ENCODE measurements at regions of chr15 and their contacts with region 1.

Region 1: GRCh38 chr15:41860049-41860828 is 21.6 kb downstream of the PLA2G4B start:
- DNase-seq: no peak
- H3K4me3 ChIP-seq: no peak overlapping the region
- H3K27ac ChIP-seq: no peak overlapping the region
- H3K4me1 ChIP-seq: peaks cover 0 to 13% (median 3%) of the 10 kb centered on the region in 4 experiments; a peak in 4 of 7 replicates
- H3K27me3 ChIP-seq: no peaks in the 10 kb centered on the region; a peak in 3 of 7 replicates
- CTCF ChIP-seq: peak in 1 of 3 experiments; percentile 42; a peak in 1 of 4 replicates
- EP300 ChIP-seq: no peak
- POLR2A ChIP-seq: no peak
- RAD21 ChIP-seq: peak in 1 of 2 experiments; percentile 32; a peak in 1 of 4 replicates

Region 2: DNA sequence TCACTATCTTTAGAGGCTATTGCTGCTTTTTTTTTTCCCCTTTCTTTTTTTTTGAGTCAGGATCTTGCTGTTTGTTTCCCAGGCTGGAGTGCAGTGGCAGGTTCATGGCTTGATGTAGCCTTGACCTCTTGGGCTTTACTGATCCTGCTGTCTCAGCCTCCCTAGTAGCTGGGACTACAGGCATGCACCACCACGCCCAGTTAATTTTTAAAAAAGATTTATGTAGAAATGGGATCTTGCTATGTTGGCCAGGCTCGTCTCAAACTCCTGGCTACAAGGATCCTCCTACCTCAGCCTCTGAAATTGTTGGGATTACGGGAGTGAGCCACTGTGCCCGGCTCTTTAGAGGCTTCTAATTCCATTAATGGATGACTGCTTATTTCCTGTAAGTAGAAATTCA is 184.9 kb before region 1 on chr15:
- CTCF ChIA-PET with region 1: no interaction called
- POLR2A ChIA-PET with region 1: no interaction called
- DNase-seq: no peak
- H3K4me3 ChIP-seq: no peak overlapping the region
- H3K27ac ChIP-seq: no peak overlapping the region
- H3K4me1 ChIP-seq: 0 out of 7 replicates have a peak, but pooled peaks cover 0 to 2% (median 0%) of the 10 kb centered on the region in 4 experiments
- H3K27me3 ChIP-seq: no peaks in the 10 kb centered on the region
- CTCF ChIP-seq: no peak
- EP300 ChIP-seq: no peak
- POLR2A ChIP-seq: no peak
- RAD21 ChIP-seq: no peak

Region 3: DNA sequence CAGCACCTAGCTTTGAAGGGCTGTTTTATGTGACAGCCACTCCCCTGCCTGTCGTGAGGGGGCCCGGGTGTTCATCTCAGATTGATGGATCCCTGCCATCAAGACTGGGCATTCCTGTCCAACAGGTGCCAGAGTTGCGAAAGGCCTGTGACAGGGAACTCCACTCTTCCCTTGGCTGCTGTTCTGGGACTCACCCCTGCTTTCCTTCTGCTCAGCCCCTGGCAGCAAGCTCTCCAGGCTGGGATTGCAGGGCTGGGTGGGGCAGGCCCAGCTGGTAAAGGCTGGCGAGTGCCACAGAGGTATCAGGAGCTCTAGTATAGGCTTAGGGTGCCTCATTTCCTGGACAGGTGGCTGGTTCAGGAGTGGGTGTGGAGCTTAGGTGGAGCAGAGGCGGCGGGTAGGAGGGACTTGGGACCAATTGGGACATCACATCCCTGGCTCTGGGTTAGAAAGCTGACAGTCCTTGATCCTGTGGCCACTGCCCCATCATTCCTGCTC is 21.8 kb before region 1 on chr15 and contains the start of gene PLA2G4B:
- CTCF ChIA-PET with region 1: interaction called, 21 read pairs
- POLR2A ChIA-PET with region 1: interaction called, 45 read pairs
- DNase-seq: no peak
- H3K4me3 ChIP-seq: no peak within 1 kb of the TSS
- H3K27ac ChIP-seq: no peak within 1 kb of the TSS
- H3K4me1 ChIP-seq: no peaks in the 10 kb centered on the region
- H3K27me3 ChIP-seq: no peaks in the 10 kb centered on the region
- CTCF ChIP-seq: no peak
- EP300 ChIP-seq: no peak
- POLR2A ChIP-seq: no peak
- RAD21 ChIP-seq: no peak
- total RNA-seq, gene PLA2G4B: 4.2 and 8.0 TPM in 2 replicates

Region 4: DNA sequence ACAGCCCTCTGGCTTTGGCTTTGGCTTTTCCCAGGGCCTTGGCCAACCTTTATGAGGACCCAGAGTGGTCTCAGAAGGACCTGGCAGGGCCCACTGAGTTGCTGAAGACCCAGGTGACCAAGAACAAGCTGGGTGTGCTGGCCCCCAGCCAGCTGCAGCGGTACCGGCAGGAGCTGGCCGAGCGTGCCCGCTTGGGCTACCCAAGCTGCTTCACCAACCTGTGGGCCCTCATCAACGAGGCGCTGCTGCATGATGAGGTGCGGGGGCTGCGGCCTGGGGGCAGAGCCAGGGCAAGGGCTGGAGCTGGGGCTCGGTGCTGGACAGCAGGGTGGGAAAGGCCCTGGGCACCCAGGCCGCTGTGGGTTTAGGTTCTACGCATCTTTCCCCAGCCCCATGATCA is 15.4 kb before region 1 on chr15:
- CTCF ChIA-PET with region 1: interaction called, 21 read pairs
- POLR2A ChIA-PET with region 1: interaction called, 45 read pairs
- DNase-seq: no peak
- H3K4me3 ChIP-seq: no peak overlapping the region
- H3K27ac ChIP-seq: no peak overlapping the region
- H3K4me1 ChIP-seq: no peaks in the 10 kb centered on the region
- H3K27me3 ChIP-seq: no peaks in the 10 kb centered on the region
- CTCF ChIP-seq: no peak
- EP300 ChIP-seq: no peak
- POLR2A ChIP-seq: no peak
- RAD21 ChIP-seq: no peak

Region 5: GRCh38 chr15:41876689-41877088 is 16.4 kb after region 1 on chr15:
- CTCF ChIA-PET with region 1: interaction called, 20 read pairs
- POLR2A ChIA-PET with region 1: interaction called, 11 read pairs
- DNase-seq: no peak
- H3K4me3 ChIP-seq: no peak overlapping the region
- H3K27ac ChIP-seq: no peak overlapping the region
- H3K4me1 ChIP-seq: peaks cover 0 to 5% (median under 1%) of the 10 kb centered on the region in 4 experiments; a peak in 3 of 7 replicates
- H3K27me3 ChIP-seq: peaks cover 11 to 17% (median 15%) of the 10 kb centered on the region in 4 experiments
- CTCF ChIP-seq: no peak
- EP300 ChIP-seq: no peak
- POLR2A ChIP-seq: no peak
- RAD21 ChIP-seq: no peak

Region 6: DNA sequence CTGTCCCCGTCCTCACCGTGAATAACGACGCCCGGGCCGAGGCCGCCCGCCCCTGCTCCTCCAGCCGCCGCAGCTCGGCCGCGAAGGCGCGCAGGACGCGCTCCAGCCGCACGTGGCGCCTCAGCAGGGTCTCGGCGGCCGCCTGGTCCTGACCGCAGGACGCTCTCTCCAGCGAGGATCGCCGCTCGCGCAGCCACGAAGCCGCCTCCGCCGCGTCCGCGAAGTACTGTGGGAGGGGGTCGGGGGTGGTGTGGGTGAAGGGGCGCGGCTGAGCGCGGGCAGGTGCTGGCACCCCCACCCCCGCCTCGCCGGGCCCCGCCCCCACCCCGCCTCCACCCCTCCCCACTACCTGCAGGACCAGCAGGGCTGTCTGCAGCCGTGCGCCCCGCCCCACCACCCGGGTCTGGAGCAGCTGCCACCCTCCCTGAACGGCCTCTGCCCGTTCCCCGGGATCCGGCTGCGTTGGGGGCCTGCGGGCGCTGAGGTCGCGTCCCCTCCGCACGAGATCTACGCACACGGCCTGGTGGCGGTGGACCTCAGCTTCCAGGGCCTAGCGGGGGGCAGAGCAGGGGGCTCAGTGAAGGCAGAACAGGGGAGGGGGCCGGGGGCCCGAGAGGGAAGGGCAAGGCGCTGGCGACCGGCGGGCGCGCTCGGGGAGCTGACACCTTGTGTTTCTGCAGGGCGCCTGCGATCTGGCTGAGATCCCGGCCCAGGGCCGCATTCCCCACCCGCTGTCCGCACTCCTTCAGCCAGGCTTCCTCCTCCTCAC is 21.9 kb after region 1 on chr15:
- CTCF ChIA-PET with region 1: interaction called, 6 read pairs
- POLR2A ChIA-PET with region 1: interaction called, 11 read pairs
- DNase-seq: peak in 1 of 2 experiments; percentile 78
- H3K4me3 ChIP-seq: peak overlapping the region; percentile 33 to 68 (median 35)
- H3K27ac ChIP-seq: no peak overlapping the region
- H3K4me1 ChIP-seq: peaks cover 0 to 9% (median 4%) of the 10 kb centered on the region in 4 experiments; a peak in 5 of 7 replicates
- H3K27me3 ChIP-seq: peaks cover 21 to 36% (median 31%) of the 10 kb centered on the region in 4 experiments
- CTCF ChIP-seq: no peak
- EP300 ChIP-seq: no peak
- POLR2A ChIP-seq: no peak
- RAD21 ChIP-seq: no peak